ENCODE measurements at regions of chr2 and their contacts with region 1.

Region 1: GRCh38 chr2:112692496-112692911 is 28.3 kb upstream of the NT5DC4 start:
- DNase-seq: peak; percentile 21 to 77 (median 44)
- H3K4me3 ChIP-seq: no peak overlapping the region
- H3K4me3 Mint-ChIP-seq: peak overlapping the region in 7 of 8 donors; percentile 13 to 71 (median 43)
- H3K27ac ChIP-seq: peak overlapping the region; percentile 10
- H3K27ac Mint-ChIP-seq: peak overlapping the region; percentile 77 to 91 (median 83)
- H3K4me1 ChIP-seq: peaks cover 34% of the 10 kb centered on the region
- H3K4me1 Mint-ChIP-seq: peaks cover 22 to 32% (median 27%) of the 10 kb centered on the region in 4 donors
- H3K27me3 ChIP-seq: no peaks in the 10 kb centered on the region
- H3K27me3 Mint-ChIP-seq: no peaks in the 10 kb centered on the region

Region 2: GRCh38 chr2:112601751-112602150 is 90.8 kb before region 1 on chr2:
- CTCF ChIA-PET with region 1: interaction called, 89 read pairs
- POLR2A ChIA-PET with region 1: interaction called, 4 read pairs
- intact Hi-C with region 1: loop called (anchors 1 kb)
- DNase-seq: no peak
- H3K4me3 ChIP-seq: no peak overlapping the region
- H3K4me3 Mint-ChIP-seq: no peak overlapping the region
- H3K27ac ChIP-seq: no peak overlapping the region
- H3K27ac Mint-ChIP-seq: peak overlapping the region in 1 of 7 donors; percentile 77
- H3K4me1 ChIP-seq: peaks cover 6% of the 10 kb centered on the region
- H3K4me1 Mint-ChIP-seq: peaks cover 4 to 5% (median 4%) of the 10 kb centered on the region in 4 donors
- H3K27me3 ChIP-seq: no peaks in the 10 kb centered on the region
- H3K27me3 Mint-ChIP-seq: no peaks in the 10 kb centered on the region

Region 3: GRCh38 chr2:112626604-112627059 is 65.9 kb before region 1 on chr2:
- CTCF ChIA-PET with region 1: interaction called, 319 read pairs
- POLR2A ChIA-PET with region 1: interaction called, 102 read pairs
- intact Hi-C with region 1: loop called (anchors 1 kb)
- DNase-seq: peak; percentile 57 to 75 (median 63)
- H3K4me3 ChIP-seq: peak overlapping the region in 1 of 2 donors; percentile 46
- H3K4me3 Mint-ChIP-seq: peak overlapping the region; percentile 69 to 83 (median 78)
- H3K27ac ChIP-seq: peak overlapping the region; percentile 15
- H3K27ac Mint-ChIP-seq: peak overlapping the region; percentile 57 to 95 (median 85)
- H3K4me1 ChIP-seq: peaks cover 75% of the 10 kb centered on the region
- H3K4me1 Mint-ChIP-seq: peaks cover 36 to 80% (median 60%) of the 10 kb centered on the region in 4 donors
- H3K27me3 ChIP-seq: no peaks in the 10 kb centered on the region
- H3K27me3 Mint-ChIP-seq: peaks cover 0 to 3% of the 10 kb centered on the region in 2 donors

Region 4: DNA sequence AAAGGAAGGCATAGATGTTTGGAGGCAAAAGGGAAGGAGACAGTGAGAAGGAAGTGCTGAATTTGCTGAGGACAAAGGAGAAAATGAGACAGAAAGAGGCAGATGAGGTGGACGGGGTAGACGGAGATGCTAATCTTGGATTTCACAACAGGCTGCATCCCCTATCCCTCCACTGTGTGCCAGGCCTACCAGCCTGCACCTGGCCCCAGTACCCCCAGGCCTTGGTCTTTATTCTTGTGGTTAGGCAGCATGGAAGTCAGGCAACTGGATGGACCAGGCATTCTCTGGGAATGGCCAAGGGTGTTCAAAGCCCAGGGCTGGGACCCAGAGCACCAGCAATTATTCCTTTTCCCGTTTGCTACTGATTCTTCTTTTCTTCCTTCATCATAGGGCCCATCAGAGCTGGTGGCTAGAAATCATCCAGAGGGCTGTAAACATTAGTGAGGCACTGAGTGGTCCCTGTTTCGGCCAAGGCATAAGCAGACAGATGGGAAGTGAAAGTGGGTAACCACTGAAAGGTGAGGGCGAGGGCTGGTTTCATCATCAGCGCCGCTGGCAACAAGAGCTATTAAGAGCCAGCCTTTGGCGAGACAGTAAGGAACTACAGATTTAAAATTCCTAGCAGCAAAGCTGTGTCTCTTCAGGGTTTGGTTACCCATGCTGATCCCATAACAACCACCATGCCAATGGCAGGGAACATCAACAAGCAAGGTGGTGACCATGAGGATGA is 56.1 kb before region 1 on chr2:
- CTCF ChIA-PET with region 1: interaction called, 319 read pairs
- POLR2A ChIA-PET with region 1: interaction called, 102 read pairs
- intact Hi-C with region 1: no loop called
- DNase-seq: no peak
- H3K4me3 ChIP-seq: no peak overlapping the region
- H3K4me3 Mint-ChIP-seq: peak overlapping the region in 6 of 8 donors; percentile 36 to 58 (median 46)
- H3K27ac ChIP-seq: no peak overlapping the region
- H3K27ac Mint-ChIP-seq: peak overlapping the region in 6 of 7 donors; percentile 4 to 82 (median 40)
- H3K4me1 ChIP-seq: peaks cover 53% of the 10 kb centered on the region
- H3K4me1 Mint-ChIP-seq: peaks cover 37 to 56% (median 48%) of the 10 kb centered on the region in 4 donors
- H3K27me3 ChIP-seq: no peaks in the 10 kb centered on the region
- H3K27me3 Mint-ChIP-seq: no peaks in the 10 kb centered on the region

Region 5: GRCh38 chr2:112645310-112646101 is 47.0 kb before region 1 on chr2 and contains the start of gene SLC20A1:
- CTCF ChIA-PET with region 1: interaction called, 18 read pairs
- POLR2A ChIA-PET with region 1: interaction called, 13 read pairs
- intact Hi-C with region 1: loop called (anchors 5 kb)
- DNase-seq: peak; percentile 96 to 100 (median 99)
- H3K4me3 ChIP-seq: peak within 1 kb of the TSS; percentile 62 to 74
- H3K4me3 Mint-ChIP-seq: peak within 1 kb of the TSS; percentile 91 to 96 (median 92)
- H3K27ac ChIP-seq: peak within 1 kb of the TSS; percentile 90
- H3K27ac Mint-ChIP-seq: peak within 1 kb of the TSS; percentile 80 to 95 (median 94)
- H3K4me1 ChIP-seq: peaks cover 51% of the 10 kb centered on the region
- H3K4me1 Mint-ChIP-seq: peaks cover 36 to 62% (median 47%) of the 10 kb centered on the region in 4 donors
- H3K27me3 ChIP-seq: no peaks in the 10 kb centered on the region
- H3K27me3 Mint-ChIP-seq: no peaks in the 10 kb centered on the region
- total RNA-seq, gene SLC20A1: 93.5 to 94.0 TPM

Region 6: DNA sequence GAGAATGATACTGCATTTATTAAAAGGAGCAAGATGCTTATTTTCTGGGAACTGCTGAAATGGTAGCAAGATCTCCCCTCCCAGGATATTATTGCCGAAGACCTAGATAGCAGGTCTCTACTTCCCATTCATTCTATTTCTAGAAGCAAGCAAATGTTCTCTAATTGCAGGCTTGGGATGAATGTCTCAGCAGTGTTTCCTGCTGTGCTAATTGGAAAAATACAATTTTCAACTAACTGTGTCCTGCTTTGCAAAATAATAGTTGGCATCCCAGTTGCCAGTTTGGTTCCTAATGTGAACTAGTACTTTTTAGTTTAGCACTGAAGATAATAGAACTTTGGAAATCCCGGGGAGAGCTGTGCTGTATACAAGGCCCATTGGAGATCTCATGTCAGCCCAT is 20.7 kb before region 1 on chr2:
- CTCF ChIA-PET with region 1: interaction called, 17 read pairs
- POLR2A ChIA-PET with region 1: no interaction called
- intact Hi-C with region 1: no loop called
- DNase-seq: no peak
- H3K4me3 ChIP-seq: no peak overlapping the region
- H3K4me3 Mint-ChIP-seq: no peak overlapping the region
- H3K27ac ChIP-seq: no peak overlapping the region
- H3K27ac Mint-ChIP-seq: no peak overlapping the region
- H3K4me1 ChIP-seq: no peaks in the 10 kb centered on the region
- H3K4me1 Mint-ChIP-seq: peaks cover 0 to under 1% (median 0%) of the 10 kb centered on the region in 4 donors
- H3K27me3 ChIP-seq: no peaks in the 10 kb centered on the region
- H3K27me3 Mint-ChIP-seq: no peaks in the 10 kb centered on the region

Region 7: DNA sequence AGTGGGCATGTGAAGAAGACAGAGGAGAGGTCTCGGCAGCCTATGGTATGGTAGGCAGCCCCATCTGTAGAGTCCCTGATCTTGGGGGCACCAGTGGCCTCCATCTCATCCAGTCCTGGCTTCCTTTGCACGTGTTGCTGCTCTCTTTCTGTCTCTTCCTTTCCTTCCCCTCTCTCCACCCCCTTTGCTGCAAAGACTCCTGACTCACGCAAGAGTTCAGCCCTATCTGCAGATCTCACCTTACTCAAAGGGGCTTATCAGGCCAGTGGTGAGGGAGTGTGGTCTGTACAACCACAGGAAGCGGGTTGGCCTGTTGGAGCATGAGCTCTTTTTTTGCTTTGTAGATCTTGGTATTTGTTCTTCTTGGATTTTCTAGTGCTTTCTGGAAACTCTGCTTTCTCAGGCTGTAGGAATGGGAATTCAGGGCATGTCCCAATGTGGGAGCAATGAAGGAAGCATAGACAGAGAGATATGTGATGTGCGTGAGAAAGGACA is 13.7 kb after region 1 on chr2:
- CTCF ChIA-PET with region 1: interaction called, 10 read pairs
- POLR2A ChIA-PET with region 1: interaction called, 16 read pairs
- intact Hi-C with region 1: loop called (anchors 1 kb)
- DNase-seq: peak; percentile 48 to 77 (median 61)
- H3K4me3 ChIP-seq: no peak overlapping the region
- H3K4me3 Mint-ChIP-seq: peak overlapping the region in 6 of 8 donors; percentile 18 to 71 (median 68)
- H3K27ac ChIP-seq: no peak overlapping the region
- H3K27ac Mint-ChIP-seq: peak overlapping the region in 3 of 7 donors; percentile 5 to 53 (median 8)
- H3K4me1 ChIP-seq: peaks cover 40% of the 10 kb centered on the region
- H3K4me1 Mint-ChIP-seq: peaks cover 17 to 45% (median 31%) of the 10 kb centered on the region in 4 donors
- H3K27me3 ChIP-seq: no peaks in the 10 kb centered on the region
- H3K27me3 Mint-ChIP-seq: peaks cover 0 to 4% of the 10 kb centered on the region in 2 donors

Measured in CD4-positive, alpha-beta memory T cell (primary cell).